ENCODE measurements at regions of chr6 and their contacts with region 1.

Region 1: GRCh38 chr6:13574149-13574570 is 241 bp upstream of the SIRT5 start:
- DNase-seq: peak; percentile 69 to 95 (median 90)

Region 2: DNA sequence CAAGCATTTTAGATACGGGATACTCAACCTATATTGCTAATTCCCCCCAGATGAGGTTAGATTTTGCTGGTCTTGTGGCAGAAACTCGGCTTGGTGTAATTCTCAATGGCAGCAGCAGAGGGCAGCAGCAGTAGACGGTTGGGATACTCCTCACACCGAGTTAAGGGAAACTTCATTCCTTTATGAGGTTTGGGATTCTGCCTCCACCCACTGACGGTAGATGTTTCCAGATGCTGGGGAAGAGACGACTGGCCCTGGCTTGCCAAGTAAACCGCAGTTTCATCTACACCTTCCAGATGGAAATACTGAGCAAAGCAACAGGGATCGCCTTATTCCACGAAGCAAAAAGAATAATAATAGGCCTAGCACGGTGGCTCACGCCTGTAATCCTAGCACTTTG is 237.6 kb before region 1 on chr6:
- intact Hi-C with region 1: loop called (anchors 10 kb)
- DNase-seq: peak; percentile 15 to 96 (median 88)

Region 3: DNA sequence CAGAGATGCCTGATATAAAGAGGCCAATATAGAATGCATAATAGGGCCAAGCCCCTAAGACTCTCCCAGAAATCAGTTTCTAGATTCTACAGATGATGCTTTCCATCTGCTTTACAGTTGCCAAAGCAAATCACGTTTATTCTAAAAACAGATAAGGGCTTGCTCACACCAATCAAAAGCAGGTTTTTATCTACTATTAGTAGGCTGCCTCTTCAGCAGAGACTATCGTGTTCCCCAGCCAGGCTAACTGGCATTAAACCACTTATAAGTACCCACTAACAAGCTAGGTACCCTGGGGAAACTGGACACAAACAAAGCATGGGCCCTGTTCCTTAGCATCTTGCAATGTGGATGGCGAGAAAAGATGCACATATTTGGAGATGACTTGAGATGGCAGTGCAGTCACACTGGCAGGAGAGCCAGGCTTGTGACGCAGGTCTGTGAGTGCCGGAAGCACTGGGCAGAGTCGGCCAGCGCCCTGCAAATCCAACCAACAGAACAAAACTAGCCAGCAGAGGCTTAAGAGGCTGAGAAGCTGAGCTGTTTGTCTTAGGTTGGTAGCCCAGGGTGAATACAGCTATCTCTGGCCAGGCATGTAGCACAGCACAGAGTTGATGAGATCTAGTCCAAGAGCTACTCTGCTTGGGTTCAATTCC is 160.1 kb before region 1 on chr6:
- intact Hi-C with region 1: loop called (anchors 5 kb)
- DNase-seq: peak in 37 of 42 donors; percentile 22 to 81 (median 59)

Region 4: DNA sequence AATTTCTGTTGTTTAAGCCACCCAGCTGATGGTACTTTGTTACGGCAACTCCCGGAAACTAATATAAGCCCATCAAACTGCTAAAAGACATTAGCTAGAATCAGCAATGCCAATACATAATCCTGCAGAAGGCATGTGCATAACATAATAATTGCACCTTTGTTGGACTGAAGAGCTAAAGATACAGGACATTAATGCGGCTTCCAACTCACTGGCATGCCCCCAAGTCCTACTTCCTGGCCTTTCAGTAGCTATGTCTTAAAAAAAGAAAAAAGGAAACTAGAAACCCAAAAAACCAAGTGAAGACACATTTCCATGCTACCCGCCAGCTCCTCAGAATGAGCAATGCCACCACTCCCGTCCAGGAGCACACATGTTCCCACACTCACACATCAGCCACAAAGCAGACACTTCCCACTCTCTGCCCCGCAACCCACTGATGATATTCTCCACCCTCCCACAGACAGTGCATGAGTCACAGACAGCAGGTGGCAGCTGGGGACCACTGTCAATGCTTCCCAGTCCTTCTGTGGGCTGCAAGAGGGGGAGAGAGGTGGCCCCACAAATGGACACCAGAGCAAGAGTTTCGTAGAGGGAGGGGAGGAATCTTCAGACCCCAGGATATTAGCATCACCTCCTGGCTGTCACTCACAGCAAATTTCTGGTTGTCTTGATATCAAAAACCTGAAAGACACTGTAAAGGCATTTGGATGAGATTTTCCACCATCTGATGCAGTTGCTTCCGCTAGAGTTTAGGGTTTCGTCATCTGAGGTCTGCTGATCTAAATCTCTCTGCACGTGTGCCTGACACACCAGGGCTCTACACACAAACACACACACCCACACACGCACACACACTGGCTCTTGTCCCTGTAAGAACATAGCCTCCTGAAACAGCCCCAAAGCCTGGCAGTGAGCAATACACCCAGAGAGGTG is 119.6 kb before region 1 on chr6:
- intact Hi-C with region 1: loop called (anchors 10 kb)
- DNase-seq: peak; percentile 66 to 96 (median 86)

Region 5: DNA sequence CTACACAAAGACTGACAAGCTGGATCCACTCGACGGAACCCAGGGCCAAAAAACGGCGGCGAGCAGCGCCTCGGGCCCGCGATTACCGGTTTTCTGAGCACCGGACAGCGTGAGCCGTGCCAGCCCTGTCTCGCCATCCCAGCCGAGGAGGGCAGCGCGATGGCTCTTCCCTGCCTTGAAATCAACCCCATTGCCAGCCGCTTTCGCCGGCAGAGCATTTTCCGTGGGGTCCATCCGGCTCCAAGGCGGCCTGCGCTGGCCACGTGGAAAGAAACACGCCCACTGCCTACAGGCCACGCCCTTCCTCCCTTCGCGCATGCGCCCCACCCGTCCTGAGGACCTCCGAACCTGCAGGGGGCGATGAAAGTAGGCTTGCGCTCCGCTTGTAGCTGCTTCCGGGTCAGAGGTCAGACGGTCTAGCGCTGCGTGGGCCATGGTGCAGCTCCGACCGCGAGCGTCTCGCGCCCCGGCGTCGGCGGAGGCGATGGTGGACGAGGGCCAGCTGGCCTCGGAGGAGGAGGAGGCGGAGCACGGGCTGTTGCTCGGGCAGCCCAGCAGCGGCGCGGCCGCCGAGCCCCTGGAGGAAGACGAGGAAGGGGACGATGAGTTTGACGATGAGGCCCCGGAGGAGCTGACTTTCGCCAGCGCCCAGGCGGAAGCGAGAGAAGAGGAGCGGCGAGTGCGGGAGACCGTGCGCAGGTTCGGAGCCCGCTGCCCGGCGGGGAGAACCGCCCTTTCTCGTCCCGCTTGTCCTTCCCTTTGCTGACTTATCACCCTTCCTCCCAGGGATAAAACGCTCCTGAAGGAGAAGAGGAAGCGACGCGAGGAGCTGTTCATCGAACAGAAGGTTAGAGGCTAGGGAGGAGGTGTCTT is 41.0 kb after region 1 on chr6 and contains the start of gene NOL7:
- intact Hi-C with region 1: loop called (anchors 1 kb)
- DNase-seq: peak; percentile 93 to 99 (median 97)

Region 6: GRCh38 chr6:13635948-13636658 is 61.9 kb after region 1 on chr6:
- intact Hi-C with region 1: no loop called
- DNase-seq: peak in 1 of 42 donors; percentile 27

Region 7: GRCh38 chr6:13681305-13682061 is 107.3 kb after region 1 on chr6:
- intact Hi-C with region 1: no loop called
- DNase-seq: no peak

Region 8: GRCh38 chr6:13711733-13712598 is 137.8 kb after region 1 on chr6 and contains the start of gene RANBP9:
- intact Hi-C with region 1: loop called (anchors 10 kb)
- DNase-seq: peak; percentile 60 to 93 (median 84)

Measured in head of caudate nucleus (tissue), 42 donors.